ENCODE measurements at regions of chr19 and their contacts with region 1.

Region 1: DNA sequence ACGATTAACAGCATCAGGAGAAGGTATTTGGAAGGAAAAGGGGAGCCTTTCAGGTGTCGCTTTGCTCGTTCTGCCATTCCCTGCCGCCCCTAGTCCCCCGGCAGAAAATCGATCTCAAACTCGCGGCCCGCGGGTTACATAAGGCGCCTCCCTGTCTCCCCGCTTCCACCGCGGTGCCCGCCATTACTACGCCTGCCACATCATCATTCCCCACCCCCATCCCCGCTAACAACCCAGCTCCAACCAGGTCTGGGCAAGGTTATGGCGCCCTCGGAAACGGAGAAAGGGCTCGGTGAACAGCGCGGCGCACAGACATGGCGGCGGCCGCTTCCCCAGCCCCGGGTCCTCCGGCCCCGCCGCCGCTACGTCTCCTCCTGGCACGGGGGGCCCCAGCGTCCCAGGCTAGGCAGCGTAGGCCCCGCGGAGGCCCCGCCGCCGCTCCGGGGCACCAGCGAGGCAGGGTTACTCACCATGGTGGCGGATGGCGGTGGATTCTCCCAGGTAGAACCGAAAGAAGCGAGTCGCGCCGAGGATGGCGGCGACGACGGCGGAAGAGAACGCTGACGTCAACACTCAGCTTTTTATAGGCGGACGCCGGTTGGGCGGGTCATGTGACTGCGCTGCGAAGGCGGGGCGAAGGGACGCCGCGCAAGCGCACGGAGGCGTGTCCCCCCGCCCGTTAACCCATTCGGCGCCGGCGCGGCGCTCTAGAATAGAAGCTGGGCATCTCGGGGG is at the start of gene EEF2:
- DNase-seq: peak; percentile 91
- ATAC-seq: peak; percentile 62 to 80
- total RNA-seq, gene EEF2: 1,815 to 2,062 TPM

Region 2: DNA sequence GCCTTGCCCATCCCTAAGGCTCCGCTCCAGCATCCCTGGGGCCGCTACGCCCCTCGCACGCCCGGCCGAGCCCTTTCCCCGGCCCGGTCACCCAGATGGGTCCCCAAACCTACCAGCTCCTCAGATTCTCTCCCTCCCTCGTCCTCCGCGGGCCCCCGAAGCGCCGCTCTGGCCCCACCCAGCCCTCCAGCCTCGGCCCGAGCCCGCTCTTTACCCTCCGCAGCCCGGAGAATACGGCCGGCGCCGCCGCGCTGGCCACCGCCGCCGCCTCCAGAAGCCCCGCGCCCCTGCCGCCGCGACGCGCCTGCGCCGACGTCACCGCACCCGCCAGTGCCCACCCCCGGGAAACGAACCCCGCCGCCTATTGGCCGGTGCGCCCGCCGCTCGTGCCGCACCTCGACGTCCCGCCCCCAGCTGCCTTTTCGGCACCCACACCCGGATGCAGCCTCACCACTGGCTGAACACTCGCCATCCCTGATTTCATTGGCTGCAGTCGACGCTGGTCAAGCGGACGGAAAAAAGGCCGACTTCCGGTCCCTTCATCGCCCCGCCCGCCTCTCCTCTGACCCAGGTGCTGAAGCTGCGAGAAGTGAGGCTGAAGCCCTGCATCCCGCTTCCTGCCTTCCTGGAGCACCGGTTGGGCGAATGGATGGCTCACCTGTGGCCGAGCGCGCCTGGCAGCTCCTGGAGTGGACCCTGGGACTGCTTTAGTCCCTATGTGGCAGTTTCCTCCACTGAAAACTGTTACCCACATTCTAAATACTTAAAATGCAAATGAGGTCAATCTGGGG is 14.1 kb before region 1 on chr19 and contains the start of gene DAPK3:
- intact Hi-C with region 1: loop called in 1 of 2 experiments (anchors 2 kb)
- DNase-seq: peak; percentile 97
- ATAC-seq: peak; percentile 86 to 90
- total RNA-seq, gene DAPK3: 52.4 to 95.1 TPM

Region 3: DNA sequence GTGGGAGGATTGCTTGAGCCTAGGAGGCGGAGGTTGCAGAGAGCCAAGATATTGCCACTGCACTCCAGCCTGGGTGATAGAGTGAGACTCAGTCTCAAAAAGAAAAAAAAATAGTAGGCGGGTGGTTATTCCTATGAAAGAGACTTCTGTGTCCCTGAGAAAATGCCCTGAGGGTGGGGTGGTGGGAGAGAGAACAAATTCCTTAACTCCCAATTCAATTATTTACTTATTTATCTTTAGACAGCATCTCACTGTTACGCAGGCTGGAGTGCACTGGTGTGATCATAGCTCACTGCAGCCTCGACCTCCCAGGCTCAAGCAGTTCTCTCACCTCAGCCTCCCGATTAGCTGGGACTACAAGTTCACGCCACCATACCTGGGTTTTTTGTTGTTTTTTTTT is 10.6 kb after region 1 on chr19:
- intact Hi-C with region 1: no loop called
- DNase-seq: no peak
- ATAC-seq: no peak

Region 4: GRCh38 chr19:4182084-4182810 is 197.2 kb after region 1 on chr19 and contains the starts of genes ANKRD24 and SIRT6:
- intact Hi-C with region 1: loop called in 1 of 2 experiments (anchors 10 kb)
- DNase-seq: peak; percentile 96
- ATAC-seq: peak; percentile 97
- total RNA-seq, gene ANKRD24: 0.86 to 1.2 TPM
- total RNA-seq, gene SIRT6: 13.0 to 21.8 TPM

Region 5: GRCh38 chr19:4199699-4200293 is 214.7 kb after region 1 on chr19:
- intact Hi-C with region 1: loop called (anchors 2 to 5 kb)
- DNase-seq: no peak
- ATAC-seq: no peak

Region 6: DNA sequence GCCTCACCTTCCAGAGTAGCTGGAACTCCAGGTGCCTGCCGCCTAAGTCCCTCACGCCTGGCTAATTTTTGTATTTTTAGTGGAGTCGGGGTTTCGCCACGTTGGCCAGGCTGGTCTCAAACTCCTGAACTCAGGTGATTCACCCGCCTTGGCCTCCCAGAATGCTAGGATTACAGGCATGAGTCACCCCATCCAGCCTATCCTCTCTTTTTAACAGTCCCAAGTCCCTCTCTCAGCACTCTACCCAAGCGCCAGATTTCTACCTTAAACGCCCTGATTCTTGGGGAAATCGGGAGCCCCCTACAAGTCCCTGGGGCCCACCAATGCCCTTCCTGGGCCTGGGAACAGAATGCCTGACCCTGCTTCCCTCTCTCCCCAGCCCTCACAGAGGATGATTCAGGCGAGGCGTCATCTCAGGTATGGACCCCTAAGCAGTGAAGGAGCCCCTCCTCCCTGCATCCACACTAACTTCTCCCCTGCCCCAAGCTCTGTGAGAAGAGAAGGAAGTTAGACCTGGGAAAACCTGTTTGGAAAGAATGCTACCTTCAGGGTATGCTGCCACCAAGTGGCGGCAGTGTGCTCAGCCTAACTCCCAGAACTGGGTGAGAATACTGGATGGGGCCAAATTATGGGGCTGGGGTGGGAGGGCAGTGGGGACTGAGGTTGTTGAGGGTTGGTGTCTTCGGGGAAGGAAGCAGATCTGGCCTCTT is 223.5 kb after region 1 on chr19:
- intact Hi-C with region 1: loop called (anchors 2 to 5 kb)
- DNase-seq: no peak
- ATAC-seq: no peak

Measured in left cardiac atrium (tissue), 4 donors.